Left lung (tissue), 14 donors: ENCODE measurements at regions of chr11 and their contacts with region 1.

Region 1: GRCh38 chr11:86818466-86819192 is 18.3 kb downstream of the PRSS23 start:
- DNase-seq: peak in 2 of 4 donors; percentile 67 to 77
- ATAC-seq: peak; percentile 85
- H3K4me3 ChIP-seq: no peak overlapping the region
- H3K27ac ChIP-seq: no peak overlapping the region
- H3K4me1 ChIP-seq: peaks cover 0 to 9% of the 10 kb centered on the region in 2 donors
- H3K27me3 ChIP-seq: no peaks in the 10 kb centered on the region
- CTCF ChIP-seq: peak; percentile 61 to 75

Region 2: GRCh38 chr11:86610559-86611341 is 207.9 kb before region 1 on chr11:
- intact Hi-C with region 1: loop called in 1 of 2 experiments (anchors 10 kb)
- DNase-seq: no peak
- ATAC-seq: no peak
- H3K4me3 ChIP-seq: no peak overlapping the region
- H3K27ac ChIP-seq: no peak overlapping the region
- H3K4me1 ChIP-seq: peaks cover 6 to 18% of the 10 kb centered on the region in 2 donors
- H3K27me3 ChIP-seq: no peaks in the 10 kb centered on the region
- CTCF ChIP-seq: no peak

Region 3: DNA sequence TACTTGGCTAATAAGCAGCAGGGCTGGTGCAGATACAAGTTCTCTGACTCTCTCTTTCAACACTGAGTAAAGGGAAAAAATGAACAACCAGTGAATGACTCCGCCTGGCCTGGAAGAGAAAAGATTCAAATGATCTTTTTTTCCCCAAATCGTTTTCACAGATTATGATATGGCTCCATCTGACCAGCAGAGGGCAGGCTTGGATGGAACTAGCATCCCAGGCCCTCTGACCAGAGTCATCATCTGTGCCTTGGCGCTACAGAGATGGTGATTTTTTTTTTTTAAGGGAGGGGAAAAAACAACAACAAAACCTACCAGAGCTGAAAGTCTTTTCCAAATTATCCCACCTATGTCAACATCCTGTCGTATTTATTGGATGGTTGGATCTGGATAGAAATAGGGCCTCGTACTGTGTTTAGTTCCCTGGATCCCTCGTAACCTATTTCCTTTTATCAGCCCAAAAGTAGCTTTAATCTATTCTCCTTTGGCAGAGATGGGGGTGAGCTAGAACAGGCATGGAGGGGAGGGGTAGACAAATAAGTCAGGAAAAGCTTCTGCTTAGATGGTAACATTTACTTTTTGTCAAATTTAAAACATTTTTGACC is 51.4 kb after region 1 on chr11:
- intact Hi-C with region 1: no loop called
- DNase-seq: peak in 3 of 4 donors; percentile 54 to 76 (median 56)
- ATAC-seq: peak; percentile 97
- H3K4me3 ChIP-seq: no peak overlapping the region
- H3K27ac ChIP-seq: no peak overlapping the region
- H3K4me1 ChIP-seq: no peaks in the 10 kb centered on the region
- H3K27me3 ChIP-seq: no peaks in the 10 kb centered on the region
- CTCF ChIP-seq: peak; percentile 67 to 75